Right ventricle myocardium superior (tissue), 1 donor: ENCODE measurements at regions of chr3 and their contacts with region 1.

Region 1: GRCh38 chr3:12484198-12484974 is at the start of gene TSEN2:
- DNase-seq: peak; percentile 97
- ATAC-seq: peak; percentile 97
- total RNA-seq, gene TSEN2: 24.6 TPM

Region 2: GRCh38 chr3:12135029-12135657 is 349.2 kb before region 1 on chr3:
- intact Hi-C with region 1: loop called (anchors 2 kb)
- DNase-seq: peak; percentile 88
- ATAC-seq: peak; percentile 90

Region 3: DNA sequence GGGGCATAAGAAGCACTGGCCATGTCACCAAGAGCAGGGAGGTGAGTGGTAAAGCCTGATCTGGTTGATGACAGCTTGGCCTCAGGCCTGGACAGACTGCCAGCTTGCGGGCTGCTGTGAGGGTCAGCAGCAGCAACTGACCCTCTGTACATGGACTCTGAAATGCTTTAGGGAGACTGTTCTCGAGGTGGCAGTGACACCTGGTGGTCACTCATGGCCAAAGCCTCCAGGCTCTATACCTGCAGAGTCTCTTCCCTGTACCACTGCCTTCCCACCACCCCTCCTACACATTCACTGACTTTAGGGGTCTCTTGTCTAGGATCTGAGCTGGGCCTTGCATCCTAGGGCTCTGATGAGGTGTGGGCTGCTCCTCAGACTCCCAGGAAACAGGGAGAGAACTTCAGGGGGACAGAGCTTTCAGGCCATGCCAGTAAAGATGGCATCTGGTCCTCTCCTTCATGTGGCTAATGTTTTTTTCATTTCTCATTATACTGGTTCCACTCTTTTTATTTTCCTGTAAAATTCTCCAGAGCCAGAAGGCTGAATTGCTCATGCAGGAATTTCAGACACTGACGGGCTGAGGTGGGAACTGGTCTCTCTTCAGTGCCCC is 308.4 kb before region 1 on chr3:
- intact Hi-C with region 1: loop called (anchors 5 kb)
- DNase-seq: peak; percentile 79
- ATAC-seq: peak; percentile 84

Region 4: DNA sequence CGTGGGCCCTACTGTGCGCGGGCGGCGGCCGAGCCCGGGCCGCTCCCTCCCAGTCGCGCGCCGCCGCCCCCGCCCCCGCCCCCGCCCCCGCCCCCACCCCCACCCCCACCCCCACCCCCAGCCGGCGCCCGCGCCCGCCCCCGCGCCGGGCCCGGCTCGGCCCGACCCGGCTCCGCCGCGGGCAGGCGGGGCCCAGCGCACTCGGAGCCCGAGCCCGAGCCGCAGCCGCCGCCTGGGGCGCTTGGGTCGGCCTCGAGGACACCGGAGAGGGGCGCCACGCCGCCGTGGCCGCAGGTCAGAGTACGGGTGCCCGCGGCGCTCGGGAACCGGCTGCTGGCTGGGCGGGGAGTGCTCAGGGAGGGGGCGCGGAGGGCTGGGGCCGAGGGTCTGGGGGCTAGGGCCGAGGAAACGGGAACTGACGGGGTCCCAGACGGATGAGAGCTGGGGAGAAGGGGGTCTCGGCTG is 196.6 kb before region 1 on chr3:
- intact Hi-C with region 1: loop called (anchors 5 kb)
- DNase-seq: peak; percentile 73
- ATAC-seq: peak; percentile 92

Region 5: DNA sequence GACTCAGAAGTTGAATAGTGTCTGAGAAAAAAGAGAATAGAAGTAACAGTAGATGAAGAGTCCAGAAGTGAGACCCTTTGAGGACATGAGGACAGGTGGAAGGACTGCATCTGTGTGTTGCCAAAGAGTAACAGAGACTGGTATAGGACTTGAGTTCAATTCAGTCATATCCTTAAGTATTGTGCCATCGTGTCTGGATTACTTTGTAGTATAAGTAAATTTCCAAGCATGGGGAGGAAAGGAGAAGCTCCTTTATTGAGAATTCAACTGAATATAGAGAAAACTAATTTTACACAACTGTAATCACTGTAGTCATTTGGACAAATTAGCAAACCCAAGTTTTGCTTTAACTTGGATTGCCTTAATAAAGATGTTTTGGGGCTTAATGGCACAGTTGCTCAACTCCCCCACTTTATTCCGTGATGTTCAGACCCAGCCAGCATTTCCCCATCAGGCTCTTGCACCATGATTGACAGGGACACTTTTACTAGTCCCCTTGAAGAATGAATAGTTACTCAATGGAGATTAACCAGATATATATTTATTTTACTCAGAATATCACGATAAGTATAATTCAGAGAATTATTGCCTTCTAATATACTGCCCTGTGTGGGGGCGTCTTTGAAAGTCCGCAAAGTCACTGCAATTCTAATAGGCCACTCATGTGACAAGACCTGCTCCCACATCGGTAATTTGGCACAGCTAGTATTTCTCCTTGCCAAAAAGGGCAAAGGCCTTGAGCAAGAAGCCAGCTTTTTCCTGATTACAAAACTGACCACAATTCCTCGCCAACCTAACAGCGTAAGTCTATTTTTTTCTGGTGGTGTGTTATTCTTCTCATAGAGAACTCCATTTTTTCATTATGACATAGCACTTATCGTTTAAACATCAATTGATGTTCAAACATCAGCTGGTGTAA is 134.2 kb before region 1 on chr3:
- intact Hi-C with region 1: loop called (anchors 10 kb)
- DNase-seq: no peak
- ATAC-seq: peak; percentile 61

Region 6: DNA sequence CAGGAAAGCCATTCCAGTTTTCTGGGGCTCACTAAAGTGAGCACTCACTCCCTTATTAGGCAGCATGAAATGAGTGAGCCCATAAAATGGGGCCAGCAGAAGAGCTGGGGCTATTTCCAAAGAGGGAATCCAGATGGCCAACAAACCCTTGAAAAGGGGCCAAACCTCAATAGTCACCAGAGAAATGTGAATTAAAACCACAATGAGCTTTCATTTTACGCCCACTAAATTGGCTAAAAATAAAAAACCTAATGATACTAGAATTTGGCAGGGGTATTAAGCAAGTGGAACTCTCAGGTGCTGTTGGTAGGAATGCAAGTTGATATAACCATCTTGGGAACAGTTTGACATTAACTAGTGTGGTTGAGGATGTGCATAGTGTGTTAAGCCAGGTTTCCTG is 221.6 kb after region 1 on chr3:
- intact Hi-C with region 1: no loop called
- DNase-seq: no peak
- ATAC-seq: no peak